ENCODE measurements at regions of chr17 and their contacts with region 1.

Region 1: GRCh38 chr17:30093463-30094147 is 23.0 kb upstream of the NSRP1 start:
- H3K4me3 ChIP-seq: no peak overlapping the region
- H3K27ac ChIP-seq: no peak overlapping the region
- H3K4me1 ChIP-seq: no peaks in the 10 kb centered on the region
- CTCF ChIP-seq: peak; percentile 84

Region 2: GRCh38 chr17:29589524-29590410 is 503.8 kb before region 1 on chr17 and contains the start of gene GIT1:
- CTCF ChIA-PET with region 1: interaction called, 17 read pairs
- POLR2A ChIA-PET with region 1: no interaction called
- H3K4me3 ChIP-seq: peak within 1 kb of the TSS; percentile 86
- H3K27ac ChIP-seq: peak within 1 kb of the TSS; percentile 82
- H3K4me1 ChIP-seq: peaks cover 26% of the 10 kb centered on the region
- CTCF ChIP-seq: no peak

Region 3: DNA sequence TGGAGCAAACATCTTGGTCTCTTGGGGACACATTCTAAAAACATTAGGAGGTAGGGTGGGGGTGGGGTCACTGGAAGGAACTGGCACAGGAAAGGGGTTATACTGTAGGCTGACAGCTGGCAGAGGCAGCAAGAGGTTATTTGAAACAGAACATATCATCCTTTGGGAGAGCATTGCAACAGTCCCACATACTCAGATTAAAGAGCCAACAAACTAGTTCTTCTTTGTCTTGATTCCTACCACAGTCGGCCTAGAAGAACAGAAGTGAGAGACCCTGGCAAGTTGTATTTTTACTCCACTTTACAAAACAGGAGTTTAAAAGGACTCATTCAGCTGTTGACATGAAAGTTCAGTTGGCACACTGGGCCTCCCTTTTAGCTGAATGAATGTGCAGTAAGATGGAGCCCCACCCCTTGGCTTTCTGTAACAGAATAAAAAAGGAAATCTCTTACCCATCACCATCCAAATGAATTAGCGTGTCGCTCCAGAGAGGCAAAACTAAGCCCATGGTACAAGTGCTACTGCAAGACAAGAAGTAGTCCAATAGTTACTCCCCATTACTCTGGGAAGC is 416.3 kb before region 1 on chr17:
- CTCF ChIA-PET with region 1: no interaction called
- POLR2A ChIA-PET with region 1: no interaction called
- H3K4me3 ChIP-seq: no peak overlapping the region
- H3K27ac ChIP-seq: no peak overlapping the region
- H3K4me1 ChIP-seq: no peaks in the 10 kb centered on the region; the same call in 1 of the 2 replicates
- CTCF ChIP-seq: no peak

Region 4: GRCh38 chr17:29807520-29808351 is 285.9 kb before region 1 on chr17:
- CTCF ChIA-PET with region 1: interaction called, 116 read pairs
- POLR2A ChIA-PET with region 1: interaction called, 3 read pairs
- H3K4me3 ChIP-seq: no peak overlapping the region
- H3K27ac ChIP-seq: no peak overlapping the region
- H3K4me1 ChIP-seq: no peaks in the 10 kb centered on the region
- CTCF ChIP-seq: peak; percentile 23; the same call in 1 of the 2 replicates

Region 5: GRCh38 chr17:30021708-30022317 is 71.8 kb before region 1 on chr17:
- CTCF ChIA-PET with region 1: interaction called, 137 read pairs
- POLR2A ChIA-PET with region 1: no interaction called
- H3K4me3 ChIP-seq: no peak overlapping the region
- H3K27ac ChIP-seq: no peak overlapping the region
- H3K4me1 ChIP-seq: no peaks in the 10 kb centered on the region
- CTCF ChIP-seq: 0 out of 2 replicates have a peak, but pooled peaks have one; percentile 34

Region 6: GRCh38 chr17:30041551-30041950 is 52.1 kb before region 1 on chr17:
- CTCF ChIA-PET with region 1: interaction called, 16 read pairs
- POLR2A ChIA-PET with region 1: no interaction called
- H3K4me3 ChIP-seq: no peak overlapping the region
- H3K27ac ChIP-seq: no peak overlapping the region
- H3K4me1 ChIP-seq: no peaks in the 10 kb centered on the region
- CTCF ChIP-seq: no peak

Region 7: GRCh38 chr17:30074730-30075129 is 18.9 kb before region 1 on chr17:
- CTCF ChIA-PET with region 1: interaction called, 18 read pairs
- POLR2A ChIA-PET with region 1: no interaction called
- H3K4me3 ChIP-seq: no peak overlapping the region
- H3K27ac ChIP-seq: no peak overlapping the region
- H3K4me1 ChIP-seq: no peaks in the 10 kb centered on the region
- CTCF ChIP-seq: no peak

Region 8: GRCh38 chr17:30116661-30117551 is 23.3 kb after region 1 on chr17 and contains the start of gene NSRP1:
- CTCF ChIA-PET with region 1: interaction called, 10 read pairs
- POLR2A ChIA-PET with region 1: interaction called, 3 read pairs
- H3K4me3 ChIP-seq: peak within 1 kb of the TSS; percentile 47
- H3K27ac ChIP-seq: peak within 1 kb of the TSS; percentile 95
- H3K4me1 ChIP-seq: peaks cover 11% of the 10 kb centered on the region
- CTCF ChIP-seq: no peak